ENCODE measurements at regions of chr7 and their contacts with region 1.

Region 1: GRCh38 chr7:99408379-99409191 is at the starts of genes BUD31 and PDAP1:
- DNase-seq: peak; percentile 93
- ATAC-seq: peak; percentile 90
- H3K4me3 Mint-ChIP-seq: peak within 1 kb of the TSS; percentile 90
- H3K27ac Mint-ChIP-seq: peak within 1 kb of the TSS; percentile 97
- H3K4me1 Mint-ChIP-seq: peaks cover 43% of the 10 kb centered on the region
- H3K27me3 Mint-ChIP-seq: no peaks in the 10 kb centered on the region
- CTCF ChIP-seq: no peak
- total RNA-seq, gene BUD31: 118 to 124 TPM
- total RNA-seq, gene PDAP1: 160 TPM

Region 2: GRCh38 chr7:99374103-99375064 is 34.2 kb before region 1 on chr7 and contains the start of gene ARPC1B:
- CTCF ChIA-PET with region 1: no interaction called
- POLR2A ChIA-PET with region 1: interaction called, 30 read pairs
- intact Hi-C with region 1: no loop called
- DNase-seq: peak; percentile 92
- ATAC-seq: peak; percentile 67
- H3K4me3 Mint-ChIP-seq: peak within 1 kb of the TSS; percentile 77
- H3K27ac Mint-ChIP-seq: peak within 1 kb of the TSS; percentile 83
- H3K4me1 Mint-ChIP-seq: peaks cover 37% of the 10 kb centered on the region
- H3K27me3 Mint-ChIP-seq: no peaks in the 10 kb centered on the region
- CTCF ChIP-seq: no peak
- total RNA-seq, gene ARPC1B: 304 to 307 TPM

Region 3: DNA sequence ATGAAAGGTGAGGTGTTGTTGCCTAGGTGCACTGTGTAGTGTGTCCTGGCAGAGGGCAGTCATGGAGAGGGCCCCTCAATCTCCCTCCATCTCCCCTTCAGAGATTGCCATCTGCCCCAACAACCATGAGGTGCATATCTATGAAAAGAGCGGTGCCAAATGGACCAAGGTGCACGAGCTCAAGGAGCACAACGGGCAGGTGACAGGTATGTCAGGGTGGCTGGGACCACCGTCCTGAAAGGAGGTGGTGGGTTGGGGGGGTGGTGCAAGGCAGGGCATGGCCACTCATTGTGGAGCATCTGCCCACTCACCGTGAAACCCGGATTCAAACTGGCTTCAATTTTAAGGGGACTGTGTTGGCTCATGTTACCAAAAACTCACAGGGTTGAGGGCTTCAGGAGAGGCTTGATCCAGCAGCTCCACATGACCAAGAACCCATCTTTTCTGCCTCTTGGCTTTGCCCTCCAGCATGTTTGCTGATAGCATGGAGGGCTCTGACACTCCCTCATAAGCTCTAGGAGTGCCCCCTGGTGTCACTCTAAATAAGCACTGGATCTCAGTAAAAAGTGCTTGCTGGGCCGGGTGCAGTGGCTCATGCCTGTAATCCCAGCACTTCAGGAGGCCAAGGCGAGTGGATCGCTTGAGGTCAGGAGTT is 21.9 kb before region 1 on chr7:
- CTCF ChIA-PET with region 1: interaction called, 6 read pairs
- POLR2A ChIA-PET with region 1: interaction called, 50 read pairs
- intact Hi-C with region 1: no loop called
- DNase-seq: peak; percentile 60
- ATAC-seq: peak; percentile 64
- H3K4me3 Mint-ChIP-seq: no peak overlapping the region
- H3K27ac Mint-ChIP-seq: peak overlapping the region; percentile 75
- H3K4me1 Mint-ChIP-seq: peaks cover 29% of the 10 kb centered on the region
- H3K27me3 Mint-ChIP-seq: no peaks in the 10 kb centered on the region
- CTCF ChIP-seq: peak; percentile 56

Region 4: DNA sequence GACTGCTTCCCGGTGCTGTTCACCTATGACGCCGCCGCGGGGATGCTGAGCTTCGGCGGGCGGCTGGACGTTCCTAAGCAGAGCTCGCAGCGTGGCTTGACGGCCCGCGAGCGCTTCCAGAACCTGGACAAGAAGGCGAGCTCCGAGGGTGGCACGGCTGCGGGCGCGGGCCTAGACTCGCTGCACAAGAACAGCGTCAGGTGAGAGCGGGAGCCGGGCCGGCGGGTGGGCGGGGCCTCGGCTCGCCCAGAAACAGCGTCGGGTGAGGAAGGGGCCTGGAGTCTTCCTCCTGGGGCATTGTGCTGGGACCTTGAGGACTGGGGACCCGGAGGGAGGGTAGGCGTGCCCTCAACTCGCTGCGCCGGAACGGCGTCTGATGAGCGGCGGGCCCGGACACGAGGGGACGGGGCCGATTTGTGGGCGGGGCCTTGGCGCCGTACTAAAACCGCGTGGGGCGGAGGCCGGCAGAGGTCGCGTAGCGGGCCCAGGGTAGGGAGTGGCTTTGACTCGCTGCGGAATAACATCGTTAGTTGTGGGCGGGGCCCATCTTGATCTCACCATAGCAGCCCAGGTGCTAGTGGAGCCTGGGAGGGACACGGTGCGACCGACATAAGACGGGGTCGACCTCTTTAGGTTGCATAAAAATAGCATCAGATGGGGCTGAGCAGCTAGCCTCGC is 15.8 kb before region 1 on chr7:
- CTCF ChIA-PET with region 1: interaction called, 6 read pairs
- POLR2A ChIA-PET with region 1: interaction called, 58 read pairs
- intact Hi-C with region 1: no loop called
- DNase-seq: peak; percentile 91
- ATAC-seq: peak; percentile 94
- H3K4me3 Mint-ChIP-seq: peak overlapping the region; percentile 58
- H3K27ac Mint-ChIP-seq: peak overlapping the region; percentile 87
- H3K4me1 Mint-ChIP-seq: peaks cover 20% of the 10 kb centered on the region
- H3K27me3 Mint-ChIP-seq: no peaks in the 10 kb centered on the region
- CTCF ChIP-seq: no peak

Region 5: GRCh38 chr7:99438573-99439480 is 30.2 kb after region 1 on chr7 and contains the starts of genes CPSF4 and PTCD1:
- CTCF ChIA-PET with region 1: no interaction called
- POLR2A ChIA-PET with region 1: interaction called, 20 read pairs
- intact Hi-C with region 1: no loop called
- DNase-seq: peak; percentile 94
- ATAC-seq: peak; percentile 93
- H3K4me3 Mint-ChIP-seq: peak within 1 kb of the TSS; percentile 97
- H3K27ac Mint-ChIP-seq: peak within 1 kb of the TSS; percentile 97
- H3K4me1 Mint-ChIP-seq: peaks cover 26% of the 10 kb centered on the region
- H3K27me3 Mint-ChIP-seq: no peaks in the 10 kb centered on the region
- CTCF ChIP-seq: no peak
- total RNA-seq, gene CPSF4: 62.3 to 64.6 TPM
- total RNA-seq, gene PTCD1: 7.2 to 8.2 TPM